Gastrocnemius medialis (tissue), 4 donors: ENCODE measurements at regions of chr19 and their contacts with region 1.

Region 1: GRCh38 chr19:45717166-45717982 is 13.3 kb downstream of the FBXO46 start:
- DNase-seq: peak; percentile 99 to 100
- ATAC-seq: peak; percentile 96 to 98
- H3K4me3 ChIP-seq: peak overlapping the region; percentile 74 to 82 (median 76)
- H3K27ac ChIP-seq: peak overlapping the region; percentile 88 to 95 (median 92)
- H3K4me1 ChIP-seq: peaks cover 12 to 17% of the 10 kb centered on the region in 2 donors
- H3K27me3 ChIP-seq: no peaks in the 10 kb centered on the region
- CTCF ChIP-seq: peak in 3 of 5 experiments; percentile 26 to 42 (median 37)
- POLR2A ChIP-seq: peak; percentile 55 to 75

Region 2: GRCh38 chr19:44800461-44800860 is 916.9 kb before region 1 on chr19:
- in situ Hi-C with region 1: no loop called
- intact Hi-C with region 1: loop called (anchors 10 kb)
- DNase-seq: peak; percentile 48 to 73
- ATAC-seq: peak; percentile 73 to 88
- H3K4me3 ChIP-seq: no peak overlapping the region
- H3K27ac ChIP-seq: no peak overlapping the region
- H3K4me1 ChIP-seq: peaks cover 9 to 14% of the 10 kb centered on the region in 2 donors
- H3K27me3 ChIP-seq: no peaks in the 10 kb centered on the region
- CTCF ChIP-seq: peak; percentile 86 to 95 (median 89)
- POLR2A ChIP-seq: no peak

Region 3: GRCh38 chr19:45506246-45506990 is 211.0 kb before region 1 on chr19:
- in situ Hi-C with region 1: no loop called
- intact Hi-C with region 1: loop called (anchors 2 kb)
- DNase-seq: peak; percentile 92 to 93
- ATAC-seq: peak; percentile 80 to 82
- H3K4me3 ChIP-seq: peak overlapping the region; percentile 84 to 91 (median 88)
- H3K27ac ChIP-seq: peak overlapping the region; percentile 90 to 96 (median 94)
- H3K4me1 ChIP-seq: peaks cover 14 to 23% of the 10 kb centered on the region in 2 donors
- H3K27me3 ChIP-seq: no peaks in the 10 kb centered on the region
- CTCF ChIP-seq: peak in 3 of 5 experiments; percentile 22 to 57 (median 55)
- POLR2A ChIP-seq: peak; percentile 93

Region 4: DNA sequence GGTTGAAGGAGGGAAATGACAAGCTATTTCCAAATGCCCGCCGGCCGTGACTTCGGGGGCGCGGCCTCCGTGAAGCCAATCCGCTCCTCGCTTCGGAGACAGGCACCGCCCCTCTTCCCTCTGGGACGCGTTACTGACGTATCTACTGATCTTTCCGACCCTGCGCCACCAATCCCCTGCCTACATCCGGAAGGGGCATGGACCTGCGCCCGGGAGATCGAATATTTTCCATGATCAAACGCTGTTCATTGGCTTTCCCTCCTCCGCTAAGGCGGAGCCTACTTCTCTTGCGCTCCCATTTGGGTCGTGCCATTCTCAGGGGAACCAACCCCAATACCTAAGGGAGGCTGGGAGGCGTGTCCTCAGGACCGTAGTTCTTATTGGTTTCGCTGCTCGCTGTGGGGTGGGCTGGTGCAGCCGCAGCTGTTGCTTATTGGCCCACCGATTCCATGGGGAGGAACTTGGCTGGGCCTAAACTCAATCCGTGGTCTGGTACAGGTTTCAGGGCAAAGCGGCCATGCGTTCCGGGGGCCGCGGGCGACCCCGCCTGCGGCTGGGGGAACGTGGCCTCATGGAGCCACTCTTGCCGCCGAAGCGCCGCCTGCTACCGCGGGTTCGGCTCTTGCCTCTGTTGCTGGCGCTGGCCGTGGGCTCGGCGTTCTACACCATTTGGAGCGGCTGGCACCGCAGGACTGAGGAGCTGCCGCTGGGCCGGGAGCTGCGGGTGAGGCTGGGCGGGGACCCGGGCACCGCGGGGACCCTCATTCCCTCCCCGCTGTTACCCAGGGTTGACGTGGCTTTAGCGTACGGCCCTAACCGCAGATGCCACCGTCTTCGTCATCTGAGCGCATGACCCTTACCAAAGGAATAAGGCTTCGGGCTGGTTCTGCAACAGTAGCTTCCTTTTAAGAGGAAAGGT is 24.9 kb before region 1 on chr19 and contains the start of gene QPCTL:
- in situ Hi-C with region 1: no loop called
- intact Hi-C with region 1: loop called (anchors 1 kb)
- DNase-seq: peak; percentile 96 to 97
- ATAC-seq: peak; percentile 92 to 94
- H3K4me3 ChIP-seq: peak within 1 kb of the TSS; percentile 77 to 97 (median 86)
- H3K27ac ChIP-seq: peak within 1 kb of the TSS; percentile 90 to 96 (median 94)
- H3K4me1 ChIP-seq: peaks cover 8 to 16% of the 10 kb centered on the region in 2 donors
- H3K27me3 ChIP-seq: no peaks in the 10 kb centered on the region
- CTCF ChIP-seq: no peak
- POLR2A ChIP-seq: peak; percentile 72 to 81
- total RNA-seq, gene QPCTL: 0.80 to 1.4 (median 0.97) TPM

Region 5: GRCh38 chr19:45730389-45731288 is 13.3 kb after region 1 on chr19 and contains the start of gene FBXO46:
- in situ Hi-C with region 1: no loop called
- intact Hi-C with region 1: loop called (anchors 1 kb)
- DNase-seq: peak; percentile 95 to 97
- ATAC-seq: peak; percentile 99 to 100
- H3K4me3 ChIP-seq: peak within 1 kb of the TSS; percentile 85 to 98 (median 92)
- H3K27ac ChIP-seq: peak within 1 kb of the TSS; percentile 83 to 90 (median 87)
- H3K4me1 ChIP-seq: peaks cover 9 to 10% of the 10 kb centered on the region in 2 donors
- H3K27me3 ChIP-seq: no peaks in the 10 kb centered on the region
- CTCF ChIP-seq: no peak
- POLR2A ChIP-seq: peak; percentile 52 to 82
- total RNA-seq, gene FBXO46: 6.6 to 14.3 (median 8.7) TPM

Region 6: DNA sequence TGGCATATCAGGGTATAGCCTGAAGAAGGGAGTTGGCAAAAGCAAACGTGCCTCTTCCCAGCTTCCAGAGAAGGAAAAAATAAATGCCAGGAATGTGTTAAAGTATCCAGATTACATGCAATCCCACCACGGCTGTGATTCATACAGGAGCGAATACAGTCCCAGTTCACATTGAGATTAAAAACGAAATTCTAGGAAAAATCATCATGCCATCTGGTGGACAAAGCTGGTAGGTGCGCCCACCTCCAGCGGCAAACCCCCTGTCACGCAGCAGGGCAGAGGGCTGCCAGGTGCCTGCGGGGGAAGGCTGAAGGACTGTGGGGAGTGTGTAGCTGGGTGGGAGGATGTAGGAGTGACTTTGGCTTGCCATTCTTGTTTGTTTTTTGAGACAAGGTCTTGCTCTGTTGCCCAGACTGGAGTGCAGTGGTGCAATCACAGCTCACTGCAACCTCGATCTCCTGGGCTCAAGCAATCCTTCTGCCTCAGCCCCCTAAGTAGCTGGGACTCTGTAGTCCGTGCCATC is 81.7 kb after region 1 on chr19:
- in situ Hi-C with region 1: no loop called
- intact Hi-C with region 1: loop called (anchors 5 kb)
- DNase-seq: peak in 1 of 2 donors; percentile 61
- ATAC-seq: peak; percentile 87 to 91
- H3K4me3 ChIP-seq: no peak overlapping the region
- H3K27ac ChIP-seq: peak overlapping the region; percentile 64 to 76 (median 70)
- H3K4me1 ChIP-seq: peaks cover 10 to 17% of the 10 kb centered on the region in 2 donors
- H3K27me3 ChIP-seq: no peaks in the 10 kb centered on the region
- CTCF ChIP-seq: peak; percentile 86 to 97 (median 92)
- POLR2A ChIP-seq: no peak